ENCODE measurements at regions of chrX and their contacts with region 1.

Region 1: GRCh38 chrX:72540318-72540717 is 32.3 kb downstream of the HDAC8 start:
- DNase-seq: no peak
- H3K4me3 ChIP-seq: no peak overlapping the region
- H3K27ac ChIP-seq: no peak overlapping the region
- H3K4me1 ChIP-seq: no peaks in the 10 kb centered on the region
- H3K27me3 ChIP-seq: no peaks in the 10 kb centered on the region
- CTCF ChIP-seq: peak in 3 of 4 experiments; percentile 20 to 46 (median 34)
- POLR2A ChIP-seq: no peak

Region 2: DNA sequence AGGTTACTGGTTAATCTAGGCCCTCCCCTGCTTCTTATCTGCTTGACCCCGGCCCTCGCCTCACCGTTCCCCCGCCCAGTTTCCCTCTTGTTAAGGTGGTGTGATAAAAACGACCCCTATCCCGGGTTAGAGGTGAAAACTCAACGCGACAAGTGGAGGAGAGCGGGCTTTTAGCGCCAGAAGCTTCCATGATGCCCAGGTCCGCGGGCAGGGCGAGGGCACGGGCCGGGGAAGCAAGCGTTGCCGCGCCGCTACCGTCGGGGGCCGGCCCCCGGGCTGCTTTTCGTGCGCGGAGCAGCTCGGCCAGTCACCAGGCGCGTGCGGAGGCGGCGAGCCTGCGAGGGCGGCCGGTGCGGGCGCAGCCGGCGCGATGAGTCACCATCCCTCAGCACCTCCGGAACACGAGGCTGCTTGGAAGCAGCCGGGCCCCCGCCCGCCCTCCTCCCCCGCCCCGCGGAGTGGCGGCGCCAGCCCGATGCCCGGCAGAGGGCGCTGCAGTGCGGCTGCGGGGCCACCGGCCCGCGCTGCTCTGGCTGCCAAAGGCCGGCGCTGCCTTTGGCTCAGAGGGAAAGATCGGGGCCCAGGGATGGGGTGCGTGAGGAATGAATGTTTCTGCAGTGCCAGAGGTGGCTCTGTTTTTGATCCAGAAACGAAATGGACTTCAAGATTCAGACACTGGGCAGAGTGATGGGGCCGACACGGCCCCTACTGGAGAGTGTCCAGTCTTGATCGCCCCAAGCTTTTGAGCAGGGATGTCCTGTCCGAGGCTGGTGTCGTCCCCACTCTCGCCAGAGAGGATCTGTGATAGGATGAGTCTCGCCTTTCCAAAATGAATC is 521.8 kb before region 1 on chrX:
- intact Hi-C with region 1: loop called (anchors 10 kb)
- DNase-seq: peak; percentile 76
- H3K4me3 ChIP-seq: no peak overlapping the region
- H3K27ac ChIP-seq: peak overlapping the region in 1 of 2 donors; percentile 42
- H3K4me1 ChIP-seq: no peaks in the 10 kb centered on the region
- H3K27me3 ChIP-seq: no peaks in the 10 kb centered on the region
- CTCF ChIP-seq: peak; percentile 53 to 85 (median 76)
- POLR2A ChIP-seq: no peak

Region 3: DNA sequence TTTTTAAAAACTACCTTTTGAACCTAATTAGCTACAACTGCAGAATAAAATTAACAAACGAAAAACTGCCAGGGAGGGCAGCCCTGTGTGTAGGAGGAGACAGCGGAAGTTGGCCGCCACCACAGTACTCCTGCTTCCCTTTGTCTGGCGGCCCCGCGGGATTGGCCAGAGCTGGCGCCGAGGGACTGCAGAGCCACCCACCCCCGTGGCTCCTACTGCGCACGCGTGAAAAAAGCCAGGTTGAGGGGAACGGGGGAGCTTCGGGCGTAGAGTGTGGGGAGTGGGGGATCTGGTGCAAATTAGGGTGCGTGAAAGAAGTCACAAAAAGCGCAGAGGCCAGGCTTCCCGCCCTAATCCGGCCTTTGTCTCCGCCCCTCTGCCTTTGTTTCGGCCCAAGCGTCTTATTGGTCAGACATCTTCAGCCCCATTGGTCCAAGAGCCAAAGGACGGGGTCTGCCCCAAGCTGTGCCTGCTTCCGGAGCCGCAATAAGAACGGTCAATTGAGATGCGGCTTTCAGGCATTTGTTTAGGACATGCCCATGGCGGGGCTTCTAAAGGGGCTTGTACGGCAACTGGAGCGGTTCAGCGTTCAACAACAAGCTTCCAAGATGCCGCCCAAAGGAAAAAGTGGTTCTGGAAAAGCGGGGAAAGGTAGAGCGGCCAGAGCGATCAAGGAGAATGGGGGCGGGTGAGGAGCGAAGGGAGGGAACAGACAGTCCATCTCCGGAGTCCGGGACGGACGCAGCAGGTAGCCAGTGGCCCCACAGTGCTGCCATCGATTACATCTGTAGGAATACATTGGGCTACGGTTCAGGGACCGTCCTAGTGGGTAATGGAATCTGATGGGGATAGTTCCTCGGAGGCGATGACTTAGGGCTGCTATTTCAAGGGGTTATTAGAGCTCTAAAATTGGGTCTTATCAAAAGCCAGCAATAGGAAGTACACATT is 358.9 kb before region 1 on chrX and contains the start of gene PIN4:
- intact Hi-C with region 1: loop called (anchors 5 kb)
- DNase-seq: peak; percentile 90
- H3K4me3 ChIP-seq: peak within 1 kb of the TSS; percentile 48
- H3K27ac ChIP-seq: peak within 1 kb of the TSS; percentile 64 to 76
- H3K4me1 ChIP-seq: no peaks in the 10 kb centered on the region
- H3K27me3 ChIP-seq: no peaks in the 10 kb centered on the region
- CTCF ChIP-seq: no peak
- POLR2A ChIP-seq: peak; percentile 26
- total RNA-seq, gene PIN4: 7.7 to 8.9 TPM

Region 4: GRCh38 chrX:72243472-72243871 is 296.8 kb before region 1 on chrX:
- intact Hi-C with region 1: loop called (anchors 5 kb)
- DNase-seq: no peak
- H3K4me3 ChIP-seq: no peak overlapping the region
- H3K27ac ChIP-seq: no peak overlapping the region
- H3K4me1 ChIP-seq: no peaks in the 10 kb centered on the region
- H3K27me3 ChIP-seq: no peaks in the 10 kb centered on the region
- CTCF ChIP-seq: no peak
- POLR2A ChIP-seq: no peak

Region 5: DNA sequence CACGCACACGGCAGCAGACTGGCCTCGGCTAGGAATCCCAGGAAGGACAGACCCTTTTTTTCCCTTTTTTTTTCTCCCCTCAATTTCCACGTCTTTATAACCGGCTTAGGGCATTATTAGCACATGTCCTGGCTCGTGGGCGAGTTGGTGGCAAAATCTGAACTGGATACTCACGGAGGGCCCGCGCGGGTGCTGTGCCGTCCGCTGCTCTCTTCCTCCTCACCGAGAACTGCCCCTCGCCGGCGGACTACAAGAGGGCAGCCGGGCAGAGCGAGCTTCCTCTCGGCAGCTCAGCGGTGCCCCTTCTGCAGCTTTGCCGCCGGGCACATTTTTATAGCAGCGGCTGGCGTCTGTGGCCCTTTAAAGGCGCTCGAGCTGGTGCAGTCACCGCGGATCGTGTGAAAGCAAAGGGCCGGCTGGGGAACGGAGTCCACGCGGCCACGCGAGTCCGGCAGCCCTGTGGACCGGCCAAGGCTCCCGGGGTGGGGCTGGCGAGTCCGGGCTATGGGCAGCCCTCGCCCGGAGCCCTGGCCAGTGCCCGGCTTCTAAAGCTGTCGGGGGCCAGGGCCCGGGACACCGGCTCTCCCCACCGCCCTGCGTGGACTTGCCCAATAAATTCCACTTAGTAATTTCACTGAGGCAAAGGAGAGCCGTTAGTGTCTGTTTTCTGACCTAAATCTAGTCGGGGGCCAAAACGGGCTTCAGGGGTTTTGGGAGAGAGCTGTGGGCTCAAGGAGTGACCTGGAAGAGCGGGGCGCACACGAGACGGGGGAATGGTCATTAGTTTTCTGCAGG is 233.3 kb before region 1 on chrX:
- intact Hi-C with region 1: loop called (anchors 5 kb)
- DNase-seq: peak; percentile 35
- H3K4me3 ChIP-seq: peak overlapping the region; percentile 32 to 41
- H3K27ac ChIP-seq: no peak overlapping the region
- H3K4me1 ChIP-seq: no peaks in the 10 kb centered on the region
- H3K27me3 ChIP-seq: no peaks in the 10 kb centered on the region
- CTCF ChIP-seq: no peak
- POLR2A ChIP-seq: no peak

Region 6: GRCh38 chrX:72392816-72393800 is 147.2 kb before region 1 on chrX:
- intact Hi-C with region 1: no loop called
- DNase-seq: no peak
- H3K4me3 ChIP-seq: no peak overlapping the region
- H3K27ac ChIP-seq: no peak overlapping the region
- H3K4me1 ChIP-seq: no peaks in the 10 kb centered on the region
- H3K27me3 ChIP-seq: no peaks in the 10 kb centered on the region
- CTCF ChIP-seq: no peak
- POLR2A ChIP-seq: no peak

Measured in prostate gland (tissue), 2 donors.